ENCODE measurements at regions of chr6 and their contacts with region 1.

Region 1: DNA sequence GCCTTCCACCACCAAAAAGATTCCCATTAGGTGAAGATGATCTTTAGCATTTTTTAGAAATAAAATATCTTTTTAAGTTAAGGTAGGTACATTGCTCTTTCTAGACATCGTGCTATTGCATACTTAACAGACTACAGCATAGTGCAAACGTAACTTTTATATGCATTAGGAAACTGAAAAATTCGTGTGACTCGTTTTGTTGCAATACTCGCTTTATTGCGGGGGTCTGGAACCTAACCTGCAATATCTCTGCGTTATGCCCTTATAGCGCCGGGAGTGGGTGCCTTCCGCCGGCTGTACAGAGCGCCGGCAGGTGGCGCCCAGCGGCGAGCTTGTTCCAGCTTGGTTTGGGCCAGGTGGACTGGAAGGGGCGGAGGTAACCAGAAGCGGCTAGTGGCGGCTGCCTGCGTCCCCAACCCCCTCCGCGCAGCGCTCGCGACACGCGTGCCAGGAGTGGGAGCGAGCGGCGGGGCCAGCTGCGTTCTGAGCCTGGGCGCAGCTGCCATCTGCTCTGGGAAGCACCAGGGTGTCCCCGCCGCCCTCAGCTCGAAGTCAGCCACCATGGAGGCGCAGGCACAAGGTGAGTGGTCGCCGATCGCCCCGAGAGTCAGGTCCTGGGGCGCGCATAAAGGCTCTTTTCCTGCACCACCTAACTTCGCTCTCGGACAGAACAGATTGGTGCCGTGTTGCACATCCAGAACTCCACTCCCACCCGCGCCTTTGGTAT is at the start of gene TPD52L1:
- DNase-seq: no peak
- H3K4me3 ChIP-seq: peak within 1 kb of the TSS; percentile 74
- CTCF ChIP-seq: peak; percentile 92

Region 2: GRCh38 chr6:124870611-124871459 is 282.7 kb before region 1 on chr6:
- CTCF ChIA-PET with region 1: interaction called, 26 read pairs
- POLR2A ChIA-PET with region 1: no interaction called
- DNase-seq: no peak
- H3K4me3 ChIP-seq: no peak overlapping the region
- CTCF ChIP-seq: peak; percentile 49

Region 3: DNA sequence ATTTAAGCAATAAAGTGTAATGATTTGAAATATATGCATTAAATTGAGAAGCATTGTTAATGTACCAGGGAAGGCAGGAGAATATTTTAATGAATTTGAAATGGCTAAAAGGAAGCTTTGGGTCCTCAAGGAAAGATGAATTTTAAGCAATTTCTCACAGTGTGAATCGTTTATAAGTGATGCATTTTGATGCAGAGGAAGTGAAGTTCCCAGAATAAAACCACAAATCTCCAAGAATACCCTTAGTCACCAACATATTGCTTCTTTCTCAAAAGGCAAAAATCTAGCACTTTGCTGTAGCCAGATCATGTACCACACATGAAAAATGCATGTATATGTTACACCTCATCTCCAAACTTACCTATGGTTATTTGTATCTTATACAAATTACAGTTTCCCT is 11.7 kb after region 1 on chr6:
- CTCF ChIA-PET with region 1: interaction called, 60 read pairs
- POLR2A ChIA-PET with region 1: no interaction called
- DNase-seq: no peak
- H3K4me3 ChIP-seq: no peak overlapping the region
- CTCF ChIP-seq: no peak

Region 4: GRCh38 chr6:125170376-125170775 is 16.8 kb after region 1 on chr6:
- CTCF ChIA-PET with region 1: interaction called, 60 read pairs
- POLR2A ChIA-PET with region 1: no interaction called
- DNase-seq: peak; percentile 54
- H3K4me3 ChIP-seq: no peak overlapping the region
- CTCF ChIP-seq: no peak

Region 5: DNA sequence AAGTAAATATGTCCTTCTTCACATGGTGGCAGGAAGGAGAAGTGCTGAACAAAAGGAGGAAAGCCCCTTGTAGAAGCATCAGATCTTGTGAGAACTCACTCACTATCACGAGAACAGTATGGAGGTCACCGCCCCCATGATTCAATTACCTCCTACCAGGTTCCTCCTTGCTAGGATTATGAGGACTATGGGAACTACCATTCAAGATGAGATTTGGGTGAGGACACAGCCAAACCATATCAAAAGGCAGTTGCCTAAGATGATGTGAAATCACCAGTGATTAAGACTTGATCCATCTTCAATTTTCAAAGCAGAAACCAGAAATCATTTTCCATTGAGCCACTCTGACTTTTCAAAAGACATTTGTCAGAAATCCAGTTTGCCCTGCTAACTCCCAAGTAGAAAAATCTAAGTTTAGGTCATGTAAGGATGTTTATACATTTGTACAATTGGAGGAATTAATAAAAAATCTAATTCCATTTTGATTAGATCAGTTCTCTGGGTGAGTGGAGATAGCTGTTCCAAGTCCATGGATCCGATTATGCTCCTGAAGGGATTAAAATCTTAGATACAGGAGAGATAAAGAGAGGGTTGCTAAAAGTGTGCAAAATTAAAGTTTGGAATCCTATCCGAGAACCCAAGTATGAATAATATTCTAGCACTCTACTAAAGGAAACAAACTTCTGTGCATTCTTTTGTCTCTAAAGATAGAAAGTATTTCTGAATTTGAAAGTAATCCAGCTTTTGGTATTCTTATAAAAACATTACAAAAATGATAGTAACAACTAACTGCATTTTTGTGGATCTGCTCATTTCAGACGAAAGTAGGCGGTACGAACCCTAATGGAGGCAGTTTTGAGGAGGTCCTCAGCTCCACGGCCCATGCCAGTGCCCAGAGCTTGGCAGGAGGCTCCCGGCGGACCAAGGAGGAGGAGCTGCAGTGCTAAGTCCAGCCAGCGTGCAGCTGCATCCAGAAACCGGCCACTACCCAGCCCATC is 108.8 kb after region 1 on chr6:
- CTCF ChIA-PET with region 1: interaction called, 24 read pairs
- POLR2A ChIA-PET with region 1: no interaction called
- DNase-seq: peak; percentile 82
- H3K4me3 ChIP-seq: no peak overlapping the region
- CTCF ChIP-seq: no peak